Activated B cell treated with CpG ODN at 0.5 μM for 24 hours (primary cell): ENCODE measurements at regions of chr14 and their contacts with region 1.

Region 1: GRCh38 chr14:51239813-51240803 is at the start of gene TMX1:
- DNase-seq: peak; percentile 83
- ATAC-seq: peak; percentile 92
- H3K4me3 Mint-ChIP-seq: no peak within 1 kb of the TSS
- H3K27ac Mint-ChIP-seq: no peak within 1 kb of the TSS
- H3K4me1 Mint-ChIP-seq: peaks cover 12% of the 10 kb centered on the region
- H3K27me3 Mint-ChIP-seq: no peaks in the 10 kb centered on the region
- CTCF ChIP-seq: no peak
- total RNA-seq, gene TMX1: 24.6 and 25.3 TPM in 2 replicates

Region 2: DNA sequence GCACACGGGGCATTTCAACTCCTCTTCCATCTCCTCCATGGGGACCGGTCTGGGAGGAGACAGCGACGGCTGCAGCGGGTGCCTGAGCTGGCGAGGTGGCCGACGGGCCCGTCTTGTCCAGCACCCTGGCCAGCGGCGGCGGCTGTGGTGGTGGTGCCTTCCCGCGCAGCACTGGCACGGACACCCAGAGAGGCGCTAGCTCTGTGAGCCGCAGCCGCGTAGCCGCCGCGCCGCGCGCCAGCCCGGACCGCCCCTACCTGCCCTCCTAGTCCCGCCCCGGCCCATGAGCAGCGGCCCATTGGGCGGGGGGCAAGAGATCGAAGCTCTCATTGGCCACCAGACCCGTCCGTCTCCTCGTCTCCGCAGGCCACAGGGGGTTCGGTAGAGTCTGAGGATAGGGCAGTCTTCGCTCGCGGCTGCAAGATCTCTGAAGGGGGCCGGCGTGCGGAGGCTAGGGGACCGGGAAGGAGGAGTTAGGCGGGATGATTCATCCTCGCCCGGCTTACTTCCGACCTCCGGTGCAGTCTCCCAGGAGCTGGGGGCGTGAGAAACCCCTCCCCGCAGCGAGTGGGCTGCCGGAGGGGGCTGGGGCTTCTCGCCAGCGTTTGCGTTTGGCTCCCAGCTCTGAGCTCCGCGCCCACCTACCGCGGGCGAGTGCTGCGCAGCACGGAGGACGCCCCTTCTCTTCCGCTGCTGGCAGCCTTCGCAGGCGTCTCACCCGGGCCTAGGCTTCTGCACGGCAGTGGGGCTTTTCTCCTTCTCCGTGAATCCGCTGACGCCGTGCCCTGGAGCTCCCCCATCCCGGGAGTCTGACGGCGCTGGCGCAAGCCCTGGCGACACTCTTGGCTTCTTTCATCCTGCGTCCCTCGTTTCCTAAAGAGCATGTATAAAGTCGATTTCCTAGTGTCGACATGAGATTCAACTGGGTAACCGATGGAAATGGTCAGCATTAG is 144.9 kb before region 1 on chr14 and contains the start of gene TRIM9:
- CTCF ChIA-PET with region 1: no interaction called
- POLR2A ChIA-PET with region 1: interaction called, 11 read pairs
- intact Hi-C with region 1: loop called (anchors 1 kb)
- DNase-seq: peak; percentile 88
- ATAC-seq: peak; percentile 98
- H3K4me3 Mint-ChIP-seq: peak within 1 kb of the TSS; percentile 91
- H3K27ac Mint-ChIP-seq: peak within 1 kb of the TSS; percentile 18
- H3K4me1 Mint-ChIP-seq: peaks cover 27% of the 10 kb centered on the region
- H3K27me3 Mint-ChIP-seq: peaks cover 26% of the 10 kb centered on the region
- CTCF ChIP-seq: no peak
- total RNA-seq, gene TRIM9: 0.24 and 0.67 TPM in 2 replicates

Region 3: GRCh38 chr14:51283402-51284085 is 43.4 kb after region 1 on chr14:
- CTCF ChIA-PET with region 1: no interaction called
- POLR2A ChIA-PET with region 1: no interaction called
- intact Hi-C with region 1: loop called (anchors 1 kb)
- DNase-seq: no peak
- ATAC-seq: peak; percentile 52
- H3K4me3 Mint-ChIP-seq: no peak overlapping the region
- H3K27ac Mint-ChIP-seq: no peak overlapping the region
- H3K4me1 Mint-ChIP-seq: peaks cover 9% of the 10 kb centered on the region
- H3K27me3 Mint-ChIP-seq: no peaks in the 10 kb centered on the region
- CTCF ChIP-seq: peak; percentile 88

Region 4: GRCh38 chr14:51310505-51310944 is 70.4 kb after region 1 on chr14:
- CTCF ChIA-PET with region 1: no interaction called
- POLR2A ChIA-PET with region 1: no interaction called
- intact Hi-C with region 1: no loop called
- DNase-seq: no peak
- ATAC-seq: no peak
- H3K4me3 Mint-ChIP-seq: no peak overlapping the region
- H3K27ac Mint-ChIP-seq: no peak overlapping the region
- H3K4me1 Mint-ChIP-seq: no peaks in the 10 kb centered on the region
- H3K27me3 Mint-ChIP-seq: peaks cover 3% of the 10 kb centered on the region
- CTCF ChIP-seq: no peak

Region 5: DNA sequence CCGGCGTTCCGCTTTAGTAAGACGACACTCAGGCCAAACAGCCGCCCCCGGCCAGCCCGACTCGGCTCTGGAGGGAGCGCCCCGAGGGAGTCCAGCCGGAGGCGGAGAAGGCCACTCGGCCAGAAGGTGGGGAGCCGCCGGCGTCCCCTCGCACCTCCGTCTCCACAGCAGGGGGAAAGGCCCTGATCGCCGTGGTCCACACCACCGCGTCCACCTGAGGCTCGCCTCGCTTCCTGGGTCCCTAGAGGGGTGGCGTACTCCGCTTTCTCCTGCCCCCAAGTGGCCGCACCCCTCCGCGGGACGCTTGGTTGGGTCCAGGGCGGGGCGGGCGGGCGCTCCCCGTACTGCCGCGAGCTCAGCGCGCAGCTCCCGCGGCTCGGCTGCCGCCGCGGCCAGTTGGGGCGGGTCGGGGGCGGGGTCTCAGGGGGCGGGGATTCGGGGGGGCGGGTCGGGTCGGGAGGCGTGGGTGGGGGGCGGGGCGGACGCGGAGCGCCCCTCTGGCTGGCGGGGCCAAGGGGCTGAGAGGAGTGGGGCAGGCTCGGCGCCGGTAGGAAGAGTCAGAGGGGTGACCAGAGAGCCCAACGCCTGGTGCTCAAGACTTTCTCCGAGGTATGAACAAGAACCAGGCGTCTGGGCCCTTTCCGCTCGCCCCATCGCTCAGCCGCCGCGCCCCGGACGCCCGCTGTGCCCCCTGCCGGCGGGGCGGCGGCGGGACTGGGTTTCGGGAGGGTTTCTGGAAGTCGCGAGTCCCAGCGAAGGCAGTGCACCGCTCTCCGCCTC is 411.5 kb after region 1 on chr14 and contains the start of gene FRMD6:
- CTCF ChIA-PET with region 1: no interaction called
- POLR2A ChIA-PET with region 1: no interaction called
- intact Hi-C with region 1: loop called (anchors 2 kb)
- DNase-seq: peak; percentile 71
- ATAC-seq: peak; percentile 80
- H3K4me3 Mint-ChIP-seq: peak within 1 kb of the TSS; percentile 82
- H3K27ac Mint-ChIP-seq: peak within 1 kb of the TSS; percentile 35
- H3K4me1 Mint-ChIP-seq: peaks cover 8% of the 10 kb centered on the region
- H3K27me3 Mint-ChIP-seq: peaks cover 30% of the 10 kb centered on the region
- CTCF ChIP-seq: no peak
- total RNA-seq, gene FRMD6: 0.32 and 0.33 TPM in 2 replicates

Region 6: GRCh38 chr14:51792819-51793218 is 552.7 kb after region 1 on chr14:
- CTCF ChIA-PET with region 1: no interaction called
- POLR2A ChIA-PET with region 1: no interaction called
- intact Hi-C with region 1: no loop called
- DNase-seq: no peak
- ATAC-seq: no peak
- H3K4me3 Mint-ChIP-seq: no peak overlapping the region
- H3K27ac Mint-ChIP-seq: no peak overlapping the region
- H3K4me1 Mint-ChIP-seq: no peaks in the 10 kb centered on the region
- H3K27me3 Mint-ChIP-seq: peaks cover 16% of the 10 kb centered on the region
- CTCF ChIP-seq: no peak

Region 7: GRCh38 chr14:51989293-51990234 is 749.5 kb after region 1 on chr14 and contains the start of gene RTRAF:
- CTCF ChIA-PET with region 1: no interaction called
- POLR2A ChIA-PET with region 1: no interaction called
- intact Hi-C with region 1: loop called (anchors 1 kb)
- DNase-seq: peak; percentile 86
- ATAC-seq: peak; percentile 97
- H3K4me3 Mint-ChIP-seq: peak within 1 kb of the TSS; percentile 98
- H3K27ac Mint-ChIP-seq: peak within 1 kb of the TSS; percentile 93
- H3K4me1 Mint-ChIP-seq: peaks cover 37% of the 10 kb centered on the region
- H3K27me3 Mint-ChIP-seq: no peaks in the 10 kb centered on the region
- CTCF ChIP-seq: no peak
- total RNA-seq, gene RTRAF: 160 and 163 TPM in 2 replicates